HCT116 (cell line): ENCODE measurements at regions of chr5 and their contacts with region 1.

Region 1: GRCh38 chr5:82351754-82352145 is 73.6 kb upstream of the RPS23 start:
- DNase-seq: peak; percentile 61
- ATAC-seq: peak; percentile 75
- H3K4me3 ChIP-seq: no peak overlapping the region
- H3K27ac ChIP-seq: no peak overlapping the region
- H3K4me1 ChIP-seq: peaks cover 20 to 68% of the 10 kb centered on the region in 2 experiments
- H3K27me3 ChIP-seq: no peaks in the 10 kb centered on the region
- CTCF ChIP-seq: peak; percentile 60 to 82 (median 61); a peak in 5 of 6 replicates
- POLR2A ChIP-seq: no peak
- RAD21 ChIP-seq: peak; percentile 85

Region 2: GRCh38 chr5:82641331-82642003 is 289.7 kb after region 1 on chr5:
- CTCF ChIA-PET with region 1: no interaction called
- POLR2A ChIA-PET with region 1: no interaction called
- RAD21 ChIA-PET with region 1: no interaction called
- intact Hi-C with region 1: loop called (anchors 5 kb)
- DNase-seq: peak; percentile 73
- ATAC-seq: peak; percentile 95
- H3K4me3 ChIP-seq: no peak overlapping the region
- H3K27ac ChIP-seq: no peak overlapping the region
- H3K4me1 ChIP-seq: peaks cover 10 to 27% of the 10 kb centered on the region in 2 experiments; a peak in 3 of 4 replicates
- H3K27me3 ChIP-seq: no peaks in the 10 kb centered on the region
- CTCF ChIP-seq: peak; percentile 62 to 72 (median 72)
- POLR2A ChIP-seq: no peak
- RAD21 ChIP-seq: peak; percentile 88

Region 3: DNA sequence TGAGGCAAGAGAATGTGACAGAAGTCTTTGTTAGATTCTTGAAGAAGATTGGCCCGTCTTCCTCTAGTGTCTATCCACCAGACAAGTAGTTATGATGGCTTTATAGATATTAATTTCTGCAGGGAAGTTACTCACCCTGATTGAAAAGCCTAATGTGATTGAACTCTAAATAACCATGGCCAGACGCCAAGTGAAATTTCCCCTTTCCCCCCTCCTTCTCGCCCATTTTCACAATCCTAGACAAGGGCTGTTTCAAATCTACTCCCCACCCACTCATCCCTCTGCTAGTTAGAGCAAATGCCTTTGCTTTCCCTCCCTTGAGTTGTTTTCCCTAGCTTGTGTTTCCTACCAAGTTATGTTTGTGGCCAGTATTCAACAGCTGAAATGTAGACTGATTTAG is 543.0 kb after region 1 on chr5:
- CTCF ChIA-PET with region 1: no interaction called
- POLR2A ChIA-PET with region 1: no interaction called
- RAD21 ChIA-PET with region 1: no interaction called
- intact Hi-C with region 1: no loop called
- DNase-seq: no peak
- ATAC-seq: no peak
- H3K4me3 ChIP-seq: no peak overlapping the region
- H3K27ac ChIP-seq: no peak overlapping the region
- H3K4me1 ChIP-seq: no peaks in the 10 kb centered on the region; a peak in 1 of 4 replicates
- H3K27me3 ChIP-seq: no peaks in the 10 kb centered on the region
- CTCF ChIP-seq: no peak
- POLR2A ChIP-seq: no peak
- RAD21 ChIP-seq: no peak

Region 4: DNA sequence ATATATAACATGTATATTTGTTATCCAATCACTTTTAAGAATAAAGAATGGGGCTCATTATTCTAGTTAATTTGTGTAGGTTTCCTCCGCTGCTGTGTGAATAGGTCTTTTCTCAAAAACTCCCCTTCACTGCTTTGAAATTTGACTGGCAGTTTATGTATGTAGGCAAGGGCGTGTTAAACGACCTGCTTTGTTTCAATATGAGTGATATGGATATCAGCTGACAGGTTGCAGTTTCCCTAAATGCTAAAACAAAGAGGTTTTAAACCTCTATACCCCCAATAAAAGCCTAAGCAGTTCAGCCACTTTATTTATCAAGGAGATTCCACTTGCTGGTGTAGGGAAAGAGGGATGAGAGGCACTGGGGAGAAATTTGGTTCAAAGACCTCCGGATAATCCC is 565.8 kb after region 1 on chr5:
- CTCF ChIA-PET with region 1: no interaction called
- POLR2A ChIA-PET with region 1: no interaction called
- RAD21 ChIA-PET with region 1: no interaction called
- intact Hi-C with region 1: loop called (anchors 10 kb)
- DNase-seq: no peak
- ATAC-seq: no peak
- H3K4me3 ChIP-seq: no peak overlapping the region
- H3K27ac ChIP-seq: no peak overlapping the region
- H3K4me1 ChIP-seq: peaks cover 5 to 29% of the 10 kb centered on the region in 2 experiments; a peak in 3 of 4 replicates
- H3K27me3 ChIP-seq: no peaks in the 10 kb centered on the region
- CTCF ChIP-seq: no peak
- POLR2A ChIP-seq: no peak
- RAD21 ChIP-seq: no peak

Region 5: DNA sequence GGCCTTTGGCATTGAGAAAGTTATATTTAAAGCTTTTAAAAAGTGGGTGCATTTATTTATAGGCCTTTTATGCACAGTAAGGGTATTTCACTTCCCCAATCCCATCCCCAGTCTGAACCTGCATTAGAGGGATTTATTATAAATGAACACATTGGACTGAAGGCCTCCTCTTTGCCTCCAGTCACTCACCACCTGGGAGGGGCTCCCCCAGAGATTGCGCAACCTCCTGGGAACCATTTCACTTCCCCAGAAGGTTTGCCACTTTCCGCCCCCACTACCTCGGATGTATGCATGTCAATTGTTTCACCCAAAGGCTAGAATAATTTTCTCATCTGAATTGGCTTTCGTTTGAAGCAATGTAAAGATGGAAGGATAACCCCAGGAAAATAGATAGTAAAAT is 1090.0 kb after region 1 on chr5:
- CTCF ChIA-PET with region 1: no interaction called
- POLR2A ChIA-PET with region 1: no interaction called
- RAD21 ChIA-PET with region 1: no interaction called
- intact Hi-C with region 1: loop called (anchors 10 kb)
- DNase-seq: no peak
- ATAC-seq: no peak
- H3K4me3 ChIP-seq: no peak overlapping the region
- H3K27ac ChIP-seq: no peak overlapping the region
- H3K4me1 ChIP-seq: no peaks in the 10 kb centered on the region
- H3K27me3 ChIP-seq: no peaks in the 10 kb centered on the region
- CTCF ChIP-seq: no peak
- POLR2A ChIP-seq: no peak
- RAD21 ChIP-seq: no peak

Region 6: DNA sequence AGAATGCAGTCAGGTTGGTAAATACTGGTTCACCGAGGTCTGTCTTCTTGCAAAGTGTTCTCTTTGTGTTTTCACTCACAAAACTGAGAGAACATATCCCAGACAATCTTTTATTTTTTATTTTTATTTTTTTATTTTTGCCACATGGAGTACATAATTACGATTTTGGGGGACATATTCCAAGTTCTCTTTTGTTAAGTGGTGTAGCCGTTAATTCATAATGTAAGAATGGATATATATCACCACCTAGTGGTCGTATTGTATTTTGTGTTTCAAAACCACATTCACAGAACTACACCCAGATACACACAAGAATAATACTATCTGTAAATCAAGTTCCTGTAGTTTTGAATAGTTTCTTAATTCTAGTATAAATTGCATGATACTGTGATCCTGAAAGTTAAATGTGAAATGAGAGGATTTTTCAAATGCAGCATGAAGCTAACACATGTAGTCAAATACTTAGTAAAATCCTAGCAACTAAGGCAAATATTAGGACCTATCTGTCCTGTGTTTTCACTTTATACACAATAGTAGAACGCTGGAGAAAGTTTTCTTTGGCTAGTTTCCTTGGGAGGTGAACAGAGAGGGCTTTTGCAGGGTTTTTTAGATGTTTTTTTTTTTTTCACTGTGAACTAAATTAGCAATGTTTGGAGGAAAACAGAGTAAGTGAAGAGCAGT is 1212.5 kb after region 1 on chr5:
- CTCF ChIA-PET with region 1: interaction called, 3 read pairs
- POLR2A ChIA-PET with region 1: no interaction called
- RAD21 ChIA-PET with region 1: no interaction called
- intact Hi-C with region 1: loop called (anchors 1 kb)
- DNase-seq: peak; percentile 35
- ATAC-seq: peak; percentile 67
- H3K4me3 ChIP-seq: no peak overlapping the region
- H3K27ac ChIP-seq: no peak overlapping the region
- H3K4me1 ChIP-seq: peaks cover 9 to 13% of the 10 kb centered on the region in 2 experiments; a peak in 2 of 4 replicates
- H3K27me3 ChIP-seq: no peaks in the 10 kb centered on the region
- CTCF ChIP-seq: peak; percentile 29 to 71 (median 65); a peak in 4 of 6 replicates
- POLR2A ChIP-seq: no peak
- RAD21 ChIP-seq: peak; percentile 83